ENCODE measurements at regions of chr7 and their contacts with region 1.

Region 1: GRCh38 chr7:131859147-131859821 is 302.9 kb upstream of the PODXL start:
- DNase-seq: peak; percentile 43
- ATAC-seq: peak; percentile 99
- H3K4me3 ChIP-seq: no peak overlapping the region
- H3K27ac ChIP-seq: no peak overlapping the region
- H3K4me1 ChIP-seq: peaks cover 0 to 6% of the 10 kb centered on the region in 2 experiments; a peak in 1 of 4 replicates
- H3K27me3 ChIP-seq: peaks cover 24% of the 10 kb centered on the region
- CTCF ChIP-seq: peak; percentile 65 to 93 (median 83); a peak in 5 of 6 replicates
- POLR2A ChIP-seq: no peak
- RAD21 ChIP-seq: peak; percentile 81

Region 2: DNA sequence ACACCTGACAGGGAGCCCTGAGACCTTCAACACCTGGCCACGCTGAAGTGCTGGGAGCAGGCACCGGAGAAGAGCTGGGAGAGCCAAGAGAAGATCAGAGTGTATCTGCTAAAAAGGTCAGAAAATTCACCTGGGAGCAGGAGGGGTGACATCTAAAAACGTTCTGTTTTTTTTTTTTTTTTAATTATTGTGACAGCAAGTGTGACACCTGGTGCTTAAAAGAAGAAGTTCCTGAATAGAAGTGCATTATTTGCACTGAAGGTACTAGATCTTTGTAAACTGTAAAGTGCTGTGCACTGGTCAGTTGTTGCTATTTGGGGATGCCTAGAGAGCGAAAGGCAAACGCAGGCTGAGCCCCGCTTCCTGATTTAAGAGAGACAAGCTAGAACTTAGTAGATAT is 295.0 kb after region 1 on chr7:
- CTCF ChIA-PET with region 1: interaction called, 3 read pairs
- POLR2A ChIA-PET with region 1: no interaction called
- RAD21 ChIA-PET with region 1: no interaction called
- intact Hi-C with region 1: loop called (anchors 10 kb)
- DNase-seq: no peak
- ATAC-seq: no peak
- H3K4me3 ChIP-seq: no peak overlapping the region
- H3K27ac ChIP-seq: no peak overlapping the region
- H3K4me1 ChIP-seq: no peaks in the 10 kb centered on the region
- H3K27me3 ChIP-seq: peaks cover 65% of the 10 kb centered on the region
- CTCF ChIP-seq: peak in 2 of 3 experiments; percentile 26 to 31; a peak in 3 of 6 replicates
- POLR2A ChIP-seq: no peak
- RAD21 ChIP-seq: peak; percentile 49

Region 3: DNA sequence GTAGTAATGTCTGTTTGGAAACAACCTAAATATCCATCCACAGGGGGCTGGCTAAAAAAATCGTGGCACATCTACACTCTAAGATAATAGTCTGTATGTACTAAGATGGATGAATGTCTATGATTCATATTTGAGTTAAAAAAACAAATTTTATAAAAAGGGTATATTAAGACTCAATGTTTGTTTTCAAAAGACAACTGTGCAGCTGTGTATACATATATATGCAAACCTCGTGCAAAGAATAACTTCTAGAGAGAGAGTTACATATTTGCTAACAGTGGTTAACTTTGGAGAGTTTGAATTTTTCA is 393.5 kb after region 1 on chr7:
- CTCF ChIA-PET with region 1: interaction called, 6 read pairs
- POLR2A ChIA-PET with region 1: no interaction called
- RAD21 ChIA-PET with region 1: interaction called in 1 of 2 experiments, 3 read pairs
- intact Hi-C with region 1: loop called (anchors 2 kb)
- DNase-seq: no peak
- ATAC-seq: no peak
- H3K4me3 ChIP-seq: no peak overlapping the region
- H3K27ac ChIP-seq: no peak overlapping the region
- H3K4me1 ChIP-seq: no peaks in the 10 kb centered on the region
- H3K27me3 ChIP-seq: peaks cover 18% of the 10 kb centered on the region
- CTCF ChIP-seq: no peak
- POLR2A ChIP-seq: no peak
- RAD21 ChIP-seq: no peak

Measured in HCT116 (cell line).